Cardiac septum (tissue), 1 donor: ENCODE measurements at regions of chr9 and their contacts with region 1.

Region 1: DNA sequence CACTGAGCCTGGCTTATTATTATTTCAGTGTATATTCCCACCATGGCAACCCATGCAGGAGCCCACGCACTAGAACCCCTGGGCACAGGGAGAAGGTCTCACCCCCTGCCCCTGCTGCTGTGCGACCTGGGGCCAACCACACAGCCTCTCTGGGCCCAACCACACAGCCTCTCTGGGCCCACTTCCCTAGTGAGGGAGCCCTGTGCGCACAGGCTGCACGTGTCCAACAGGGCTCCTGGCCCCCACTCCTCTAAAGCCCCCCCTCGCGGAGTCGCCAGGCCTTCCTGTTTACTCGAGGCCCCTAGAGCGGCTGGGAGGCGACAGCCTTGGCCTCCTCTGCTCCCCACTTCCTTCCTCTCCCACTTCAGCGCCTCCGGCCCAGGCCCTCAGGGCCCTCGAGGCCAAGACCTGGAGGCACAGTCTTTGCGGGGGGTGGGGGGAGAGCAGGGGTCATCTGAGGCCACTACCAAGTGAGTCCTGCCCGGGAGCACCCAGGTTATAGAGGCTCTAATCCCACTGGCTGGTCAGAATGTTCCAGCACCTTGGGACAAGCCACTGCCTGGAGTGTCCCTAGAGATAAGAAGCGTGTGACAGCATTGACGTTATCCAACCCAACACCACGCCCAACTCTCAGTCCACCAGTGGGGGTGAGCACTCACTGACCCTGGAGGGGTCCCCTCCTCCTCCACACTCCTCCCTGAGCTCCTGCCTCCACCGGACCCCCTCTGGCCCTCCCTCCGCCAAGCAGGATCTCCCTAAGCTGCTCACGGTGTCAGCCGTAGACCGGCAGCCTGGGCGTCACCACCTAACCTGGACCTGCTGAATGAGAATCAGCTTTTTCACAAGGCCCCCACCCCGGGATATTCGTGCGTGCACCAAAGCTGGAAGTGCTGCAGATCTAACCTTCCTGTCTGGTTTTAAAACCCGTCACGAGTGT is 7.9 kb upstream of the ENG start:
- DNase-seq: peak; percentile 91

Region 2: GRCh38 chr9:127828262-127829031 is 33.9 kb before region 1 on chr9:
- intact Hi-C with region 1: loop called (anchors 5 kb)
- DNase-seq: peak; percentile 94

Region 3: DNA sequence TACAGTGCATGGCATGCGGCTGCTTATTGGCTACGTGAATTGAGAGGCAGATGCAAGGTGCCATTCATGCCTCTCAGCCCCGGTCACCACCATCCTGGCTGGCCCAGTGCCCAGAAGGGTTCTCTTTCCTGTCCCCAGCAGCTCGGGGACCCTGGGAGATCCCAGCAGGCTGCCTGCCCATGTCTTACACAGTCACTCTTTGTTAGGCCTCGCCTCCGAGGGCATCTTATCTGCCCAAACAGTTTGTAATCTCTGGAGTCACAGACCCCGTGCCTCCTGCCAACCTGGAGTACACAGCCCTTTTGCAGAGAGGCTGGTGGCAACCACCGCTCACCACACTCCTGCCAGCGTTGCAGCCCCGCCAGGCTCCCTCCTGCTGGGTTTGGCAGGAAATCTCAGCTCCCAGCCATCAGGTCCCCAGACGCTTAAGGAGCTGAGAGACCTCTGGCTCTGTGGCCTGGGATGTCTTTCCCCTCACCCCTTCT is 22.1 kb after region 1 on chr9:
- intact Hi-C with region 1: no loop called
- DNase-seq: no peak